CD8-positive, alpha-beta T cell (primary cell): ENCODE measurements at regions of chr14 and their contacts with region 1.

Region 1: DNA sequence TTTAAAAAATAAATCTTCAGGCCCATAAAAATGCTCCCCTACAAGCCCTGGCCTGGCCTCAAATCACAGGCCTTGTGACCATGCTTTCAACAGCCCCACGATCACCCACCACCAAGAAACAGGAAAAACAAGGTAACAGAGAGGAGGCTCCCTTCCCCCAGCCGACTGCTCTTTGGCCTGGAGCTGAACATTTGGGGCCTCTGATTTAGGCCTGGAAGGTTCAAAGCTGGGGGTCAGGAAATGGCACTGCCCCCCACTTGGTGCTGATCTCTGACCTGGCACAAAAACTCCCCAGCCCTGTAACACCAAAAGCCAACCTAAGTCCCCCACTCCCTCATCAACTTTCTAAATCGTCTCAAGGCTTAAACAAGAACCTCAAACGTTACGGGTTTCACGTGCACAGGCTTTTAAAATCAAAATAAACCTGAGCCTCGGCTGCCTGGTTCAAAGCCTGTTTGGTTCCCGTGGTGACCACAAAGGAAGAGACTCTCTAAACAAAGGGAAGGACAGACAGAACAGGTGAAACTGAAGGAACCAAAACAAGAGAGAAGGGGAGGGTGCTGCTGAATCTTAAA is 9.0 kb downstream of the ACTN1 start:
- DNase-seq: peak; percentile 30 to 86 (median 64)
- ATAC-seq: peak; percentile 59
- H3K4me3 ChIP-seq: peak overlapping the region; percentile 3 to 31
- H3K4me3 Mint-ChIP-seq: peak overlapping the region; percentile 81
- H3K27ac ChIP-seq: peak overlapping the region; percentile 67 to 73
- H3K27ac Mint-ChIP-seq: peak overlapping the region; percentile 93
- H3K4me1 ChIP-seq: peaks cover 97% of the 10 kb centered on the region
- H3K4me1 Mint-ChIP-seq: peaks cover 97% of the 10 kb centered on the region
- H3K27me3 ChIP-seq: no peaks in the 10 kb centered on the region
- H3K27me3 Mint-ChIP-seq: no peaks in the 10 kb centered on the region
- CTCF ChIP-seq: no peak

Region 2: GRCh38 chr14:68955164-68955921 is 14.8 kb before region 1 on chr14:
- CTCF ChIA-PET with region 1: interaction called, 10 read pairs
- POLR2A ChIA-PET with region 1: interaction called, 20 read pairs
- intact Hi-C with region 1: loop called (anchors 1 kb)
- DNase-seq: no peak
- ATAC-seq: peak; percentile 18
- H3K4me3 ChIP-seq: peak overlapping the region in 1 of 2 experiments; percentile 18
- H3K4me3 Mint-ChIP-seq: peak overlapping the region; percentile 58
- H3K27ac ChIP-seq: peak overlapping the region; percentile 19 to 36
- H3K27ac Mint-ChIP-seq: peak overlapping the region; percentile 83
- H3K4me1 ChIP-seq: peaks cover 95% of the 10 kb centered on the region
- H3K4me1 Mint-ChIP-seq: peaks cover 88% of the 10 kb centered on the region
- H3K27me3 ChIP-seq: no peaks in the 10 kb centered on the region
- H3K27me3 Mint-ChIP-seq: no peaks in the 10 kb centered on the region
- CTCF ChIP-seq: no peak

Region 3: GRCh38 chr14:69005432-69006147 is 35.5 kb after region 1 on chr14:
- CTCF ChIA-PET with region 1: no interaction called
- POLR2A ChIA-PET with region 1: no interaction called
- intact Hi-C with region 1: no loop called
- DNase-seq: no peak
- ATAC-seq: no peak
- H3K4me3 ChIP-seq: no peak overlapping the region
- H3K4me3 Mint-ChIP-seq: no peak overlapping the region
- H3K27ac ChIP-seq: no peak overlapping the region
- H3K27ac Mint-ChIP-seq: no peak overlapping the region
- H3K4me1 ChIP-seq: peaks cover 2% of the 10 kb centered on the region
- H3K4me1 Mint-ChIP-seq: peaks cover 3% of the 10 kb centered on the region
- H3K27me3 ChIP-seq: no peaks in the 10 kb centered on the region
- H3K27me3 Mint-ChIP-seq: no peaks in the 10 kb centered on the region
- CTCF ChIP-seq: no peak